PC-3 (cell line): ENCODE measurements at regions of chr4 and their contacts with region 1.

Region 1: GRCh38 chr4:38562751-38563198 is 101.2 kb upstream of the KLF3 start:
- DNase-seq: peak; percentile 6
- ATAC-seq: no peak
- H3K4me3 ChIP-seq: no peak overlapping the region
- H3K27ac ChIP-seq: no peak overlapping the region
- H3K4me1 ChIP-seq: peaks cover 36% of the 10 kb centered on the region
- H3K27me3 ChIP-seq: no peaks in the 10 kb centered on the region
- CTCF ChIP-seq: no peak

Region 2: GRCh38 chr4:38620790-38621684 is 58.3 kb after region 1 on chr4:
- CTCF ChIA-PET with region 1: no interaction called
- POLR2A ChIA-PET with region 1: no interaction called
- intact Hi-C with region 1: loop called (anchors 2 kb)
- DNase-seq: peak; percentile 91
- ATAC-seq: peak; percentile 92
- H3K4me3 ChIP-seq: peak overlapping the region; percentile 42; the same call in 1 of the 2 replicates
- H3K27ac ChIP-seq: peak overlapping the region; percentile 87
- H3K4me1 ChIP-seq: peaks cover 23% of the 10 kb centered on the region
- H3K27me3 ChIP-seq: no peaks in the 10 kb centered on the region
- CTCF ChIP-seq: no peak

Region 3: DNA sequence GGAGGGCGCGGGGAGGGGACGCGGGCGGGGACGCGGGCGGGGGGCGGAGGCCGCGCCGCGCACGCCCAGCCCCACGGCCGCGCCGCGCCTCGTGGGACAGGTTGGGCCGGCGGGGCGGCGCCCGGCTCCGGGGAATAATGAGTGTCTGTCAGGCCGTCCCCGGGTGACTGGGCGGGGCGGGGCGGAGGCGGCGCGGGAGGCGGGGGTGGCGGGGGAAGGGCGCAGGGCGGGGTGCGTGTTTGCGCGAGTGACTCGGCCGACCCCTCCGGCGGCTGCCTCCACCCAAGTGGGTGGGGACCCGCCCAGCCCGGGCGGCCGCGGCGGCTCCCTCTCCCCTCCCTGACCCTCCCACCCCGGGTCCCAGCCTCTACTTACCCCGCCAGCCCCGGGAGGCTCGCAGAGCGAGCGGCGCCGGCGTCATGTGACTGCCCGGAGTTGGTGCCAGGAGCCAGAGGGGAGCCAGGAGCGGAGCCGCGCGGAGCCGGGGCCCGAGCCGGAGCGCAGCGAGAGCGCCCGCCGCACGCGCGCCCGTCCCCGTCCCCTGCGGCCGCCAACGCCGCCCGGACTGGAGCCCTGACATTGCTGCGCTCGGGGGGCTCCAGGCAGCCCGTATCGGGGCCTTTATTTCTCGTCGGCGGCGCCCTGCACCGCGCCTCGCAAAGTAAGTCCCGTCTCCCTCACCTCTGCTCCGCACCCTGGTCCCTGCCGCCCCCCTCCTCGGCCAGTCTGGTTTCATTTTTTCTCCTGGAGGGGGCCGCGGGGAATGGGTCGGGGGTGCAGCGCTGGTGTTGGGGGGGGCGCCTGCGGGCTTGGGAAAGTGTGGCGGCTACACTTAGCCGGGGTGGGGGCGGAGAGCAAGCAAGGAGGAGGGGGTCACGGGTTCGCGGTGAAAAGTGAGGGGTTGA is 101.3 kb after region 1 on chr4 and contains the start of gene KLF3:
- CTCF ChIA-PET with region 1: no interaction called
- POLR2A ChIA-PET with region 1: no interaction called
- intact Hi-C with region 1: loop called (anchors 10 kb)
- DNase-seq: peak; percentile 77
- ATAC-seq: peak; percentile 75
- H3K4me3 ChIP-seq: peak within 1 kb of the TSS; percentile 87
- H3K27ac ChIP-seq: peak within 1 kb of the TSS; percentile 81
- H3K4me1 ChIP-seq: peaks cover 25% of the 10 kb centered on the region
- H3K27me3 ChIP-seq: no peaks in the 10 kb centered on the region
- CTCF ChIP-seq: no peak
- total RNA-seq, gene KLF3: 12.4 and 14.6 TPM in 2 replicates

Region 4: DNA sequence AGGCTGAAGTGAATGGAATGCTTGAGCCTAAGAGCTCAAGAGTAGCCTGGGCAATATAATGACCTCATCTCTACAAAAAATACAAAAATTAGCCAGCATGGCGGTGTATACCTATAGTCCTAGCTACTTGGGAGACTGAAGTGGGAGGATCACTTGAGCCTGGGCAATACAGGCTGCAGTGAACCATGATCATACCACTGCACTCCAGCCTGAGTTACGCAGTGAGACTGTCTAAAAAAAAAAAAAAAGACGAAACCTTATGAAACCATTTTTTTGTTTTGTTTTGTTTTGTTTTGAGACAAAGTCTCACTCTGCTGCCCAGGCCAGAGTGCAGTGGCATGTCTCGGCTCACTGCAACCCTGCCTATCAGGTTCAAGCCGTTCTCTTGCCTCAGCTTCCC is 183.1 kb after region 1 on chr4:
- CTCF ChIA-PET with region 1: no interaction called
- POLR2A ChIA-PET with region 1: interaction called, 11 read pairs
- intact Hi-C with region 1: no loop called
- DNase-seq: no peak
- ATAC-seq: no peak
- H3K4me3 ChIP-seq: no peak overlapping the region
- H3K27ac ChIP-seq: no peak overlapping the region
- H3K4me1 ChIP-seq: no peaks in the 10 kb centered on the region
- H3K27me3 ChIP-seq: no peaks in the 10 kb centered on the region
- CTCF ChIP-seq: no peak